Mammary epithelial cell (primary cell): ENCODE measurements at regions of chr3 and their contacts with region 1.

Region 1: DNA sequence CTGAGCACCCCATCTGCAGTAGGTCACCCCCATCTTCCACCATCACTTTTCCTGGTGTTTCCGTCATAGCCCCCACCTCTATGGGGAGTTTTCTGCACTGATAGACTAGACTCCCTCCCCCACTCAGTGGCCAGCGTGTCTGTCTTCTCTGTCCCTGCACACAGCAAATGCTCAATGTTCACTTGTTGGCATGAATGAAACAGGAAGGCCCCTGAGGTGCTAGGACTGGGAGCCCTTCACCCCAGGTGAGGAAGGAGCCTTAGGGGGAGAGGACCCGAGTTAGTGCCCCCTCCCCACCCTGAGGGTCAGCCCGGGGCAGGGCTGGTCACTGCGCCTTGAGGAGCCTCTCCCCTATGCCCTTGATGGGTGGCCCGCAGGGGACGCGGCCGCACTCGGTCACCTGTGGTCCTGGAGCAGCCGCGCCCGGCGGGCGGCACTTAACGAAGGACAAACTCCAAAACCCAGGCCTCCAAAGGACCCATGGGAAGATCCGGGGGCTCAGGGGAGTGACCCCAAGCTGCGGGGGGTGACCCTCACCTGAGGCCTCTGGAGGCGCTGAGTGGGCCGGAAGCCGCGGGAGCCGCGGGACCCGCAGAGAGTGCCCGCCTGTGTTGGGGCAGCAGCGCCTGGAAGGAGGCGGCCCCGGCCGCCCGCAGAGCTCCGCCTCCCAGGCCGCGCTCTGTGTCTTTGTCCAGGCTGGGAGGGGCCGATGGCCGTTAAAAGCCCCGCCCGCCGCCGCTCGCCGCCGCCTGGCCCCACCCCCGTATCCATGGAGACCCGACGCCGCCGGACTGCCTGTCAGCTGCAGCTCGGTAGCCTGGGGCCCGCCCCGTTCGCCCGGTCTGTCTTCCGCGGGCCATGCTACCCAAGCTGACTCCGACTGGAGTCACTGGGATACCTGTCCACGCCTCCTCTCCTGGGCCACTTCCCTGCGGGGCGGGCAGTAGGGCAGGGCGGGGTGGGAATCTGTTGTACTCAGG is 15.5 kb upstream of the FANCD2 start:
- DNase-seq: peak; percentile 93
- H3K4me3 ChIP-seq: peak overlapping the region; percentile 55 to 78 (median 57)
- H3K27ac ChIP-seq: no peak overlapping the region
- H3K4me1 ChIP-seq: peaks cover 21% of the 10 kb centered on the region
- H3K27me3 ChIP-seq: no peaks in the 10 kb centered on the region
- CTCF ChIP-seq: no peak

Region 2: DNA sequence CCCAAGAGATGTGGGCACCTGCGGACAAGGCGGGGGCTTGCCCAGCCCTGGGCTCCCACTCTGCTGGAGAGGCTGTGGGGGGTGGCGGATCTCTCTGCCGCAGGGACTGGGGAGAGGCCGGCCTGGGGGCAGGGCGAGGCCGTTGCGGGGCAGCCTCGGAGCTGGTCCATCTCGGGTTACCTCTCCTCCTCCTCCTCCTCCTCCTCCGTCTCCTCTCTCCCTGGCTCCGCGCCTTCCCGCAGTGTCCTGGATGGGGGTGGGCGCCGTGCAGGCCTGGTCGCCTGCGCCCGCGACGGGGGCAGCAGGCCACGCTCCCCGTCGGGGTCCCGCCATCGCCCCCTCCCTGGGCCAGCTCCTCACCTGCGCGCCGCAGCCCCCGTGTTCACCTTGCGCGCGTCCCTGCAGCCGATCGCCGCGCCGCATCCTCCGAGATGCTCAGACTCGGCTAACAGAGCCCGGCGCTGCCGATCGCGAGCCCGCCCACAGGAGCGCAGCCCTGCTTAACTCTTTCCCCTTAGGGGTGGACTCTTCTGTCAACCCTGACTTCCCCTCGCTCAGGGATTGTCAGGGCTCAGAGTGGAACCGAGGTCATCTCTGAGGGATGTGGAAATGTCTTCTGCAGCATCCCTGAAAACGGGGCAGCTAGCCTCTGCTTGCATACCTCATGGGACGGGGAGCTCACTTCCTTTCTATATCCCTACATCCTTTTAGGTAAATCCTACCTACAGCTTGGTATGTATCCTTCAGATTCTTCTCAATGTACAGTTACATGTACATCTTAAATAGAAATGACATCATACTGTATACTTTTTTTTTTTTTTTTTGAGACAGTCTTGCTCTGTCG is 58.6 kb before region 1 on chr3 and contains the start of gene PRRT3:
- CTCF ChIA-PET with region 1: no interaction called
- dilution Hi-C with region 1: loop called (anchors 5 kb)
- in situ Hi-C with region 1: no loop called
- intact Hi-C with region 1: no loop called
- DNase-seq: peak; percentile 40
- H3K4me3 ChIP-seq: peak within 1 kb of the TSS; percentile 16 to 62 (median 55)
- H3K27ac ChIP-seq: no peak within 1 kb of the TSS
- H3K4me1 ChIP-seq: peaks cover 12% of the 10 kb centered on the region
- H3K27me3 ChIP-seq: no peaks in the 10 kb centered on the region
- CTCF ChIP-seq: no peak
- total RNA-seq, gene PRRT3: 1.8 to 2.0 TPM

Region 3: GRCh38 chr3:9986237-9986725 is 24.5 kb before region 1 on chr3:
- CTCF ChIA-PET with region 1: no interaction called
- dilution Hi-C with region 1: no loop called
- in situ Hi-C with region 1: no loop called
- intact Hi-C with region 1: loop called (anchors 1 kb)
- DNase-seq: peak; percentile 30
- H3K4me3 ChIP-seq: peak overlapping the region; percentile 87 to 98 (median 92)
- H3K27ac ChIP-seq: peak overlapping the region; percentile 89
- H3K4me1 ChIP-seq: peaks cover 23% of the 10 kb centered on the region
- H3K27me3 ChIP-seq: no peaks in the 10 kb centered on the region
- CTCF ChIP-seq: no peak

Region 4: GRCh38 chr3:10149226-10149625 is 138.4 kb after region 1 on chr3:
- CTCF ChIA-PET with region 1: no interaction called
- dilution Hi-C with region 1: no loop called
- in situ Hi-C with region 1: no loop called
- intact Hi-C with region 1: no loop called
- DNase-seq: no peak
- H3K4me3 ChIP-seq: no peak overlapping the region
- H3K27ac ChIP-seq: no peak overlapping the region
- H3K4me1 ChIP-seq: no peaks in the 10 kb centered on the region
- H3K27me3 ChIP-seq: no peaks in the 10 kb centered on the region
- CTCF ChIP-seq: no peak